ENCODE measurements at regions of chr12 and their contacts with region 1.

Region 1: GRCh38 chr12:15856097-15856982 is 25.8 kb upstream of the STRAP start:
- DNase-seq: peak in 2 of 5 donors; percentile 37 to 44
- ATAC-seq: peak in 3 of 4 donors; percentile 46 to 76 (median 67)
- H3K4me3 ChIP-seq: no peak overlapping the region
- H3K27ac ChIP-seq: peak overlapping the region in 5 of 12 donors; percentile 1 to 45 (median 8)
- H3K4me1 ChIP-seq: peaks cover 0 to 7% (median under 1%) of the 10 kb centered on the region in 12 donors
- H3K27me3 ChIP-seq: peaks cover 0 to 6% (median 0%) of the 10 kb centered on the region in 9 donors
- CTCF ChIP-seq: peak; percentile 64 to 94 (median 84)
- POLR2A ChIP-seq: no peak

Region 2: DNA sequence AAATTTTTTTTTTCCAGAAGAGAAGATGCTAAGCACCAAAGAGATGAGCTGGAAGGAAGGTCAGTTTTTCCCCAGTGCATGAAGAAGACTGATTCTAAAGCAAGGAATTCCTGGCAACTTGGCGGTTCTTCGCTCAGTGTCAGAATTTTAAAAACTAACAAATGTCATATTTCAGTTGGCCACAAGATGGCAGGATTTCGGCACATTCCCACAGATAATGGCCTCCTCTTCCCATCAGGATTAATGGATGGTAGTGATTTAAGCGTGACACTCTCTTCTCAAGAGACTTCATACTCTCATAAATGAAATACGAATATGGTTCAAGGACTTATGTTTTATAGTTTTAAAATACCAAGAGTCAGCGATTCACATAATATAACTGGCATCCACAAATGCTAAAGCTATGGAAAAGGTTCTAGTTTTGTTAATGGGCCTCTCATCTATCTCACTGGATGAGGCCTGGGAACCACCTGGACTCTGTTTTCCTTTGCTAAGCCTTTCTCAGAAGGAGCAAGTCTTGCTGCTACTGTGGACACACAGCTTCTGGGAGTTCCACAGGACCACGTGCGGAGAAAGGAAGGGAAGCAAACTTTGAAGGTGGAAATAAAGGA is 580.1 kb before region 1 on chr12:
- intact Hi-C with region 1: loop called (anchors 2 to 10 kb)
- DNase-seq: peak in 1 of 5 donors; percentile 14
- ATAC-seq: peak in 2 of 4 donors; percentile 49 to 61
- H3K4me3 ChIP-seq: no peak overlapping the region
- H3K27ac ChIP-seq: no peak overlapping the region
- H3K4me1 ChIP-seq: peaks cover 0 to 15% (median 11%) of the 10 kb centered on the region in 12 donors
- H3K27me3 ChIP-seq: peaks cover 0 to 8% (median 0%) of the 10 kb centered on the region in 9 donors
- CTCF ChIP-seq: peak; percentile 56 to 80 (median 72)
- POLR2A ChIP-seq: no peak

Region 3: DNA sequence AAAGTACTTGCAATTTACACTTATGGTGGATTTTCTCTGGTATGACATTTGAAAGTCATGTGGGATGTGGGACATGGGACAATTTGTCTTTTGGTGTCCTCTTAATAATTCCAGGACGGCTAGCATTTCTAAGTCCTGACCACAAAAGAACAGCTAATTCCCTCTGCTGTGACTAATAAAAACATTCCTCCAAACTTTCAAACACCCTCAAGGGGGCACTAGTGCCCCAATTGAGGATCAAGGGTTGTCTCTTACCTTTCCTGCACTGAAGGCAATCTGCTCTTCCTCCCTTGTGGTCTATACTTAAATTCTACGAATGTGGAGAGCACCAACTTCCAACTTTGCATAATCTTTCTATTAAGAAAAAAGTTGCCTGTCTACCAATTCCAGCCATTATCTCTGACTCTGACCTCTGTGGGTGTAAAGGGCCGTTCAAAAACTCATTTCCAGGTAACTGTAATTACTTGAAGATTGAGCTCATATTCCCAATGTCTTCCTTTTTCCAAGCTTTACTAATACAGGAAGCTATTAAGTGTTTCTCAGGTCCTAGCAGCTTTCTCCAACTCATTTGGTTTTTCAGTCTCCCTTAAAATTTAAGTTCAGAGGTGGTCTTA is 323.9 kb before region 1 on chr12:
- intact Hi-C with region 1: loop called in 4 of 10 experiments (anchors 5 kb)
- DNase-seq: no peak
- ATAC-seq: peak in 3 of 4 donors; percentile 54 to 69 (median 57)
- H3K4me3 ChIP-seq: no peak overlapping the region
- H3K27ac ChIP-seq: no peak overlapping the region
- H3K4me1 ChIP-seq: peaks cover 0 to 26% (median 0%) of the 10 kb centered on the region in 12 donors
- H3K27me3 ChIP-seq: no peaks in the 10 kb centered on the region
- CTCF ChIP-seq: peak in 11 of 12 donors; percentile 25 to 58 (median 38)
- POLR2A ChIP-seq: no peak

Region 4: DNA sequence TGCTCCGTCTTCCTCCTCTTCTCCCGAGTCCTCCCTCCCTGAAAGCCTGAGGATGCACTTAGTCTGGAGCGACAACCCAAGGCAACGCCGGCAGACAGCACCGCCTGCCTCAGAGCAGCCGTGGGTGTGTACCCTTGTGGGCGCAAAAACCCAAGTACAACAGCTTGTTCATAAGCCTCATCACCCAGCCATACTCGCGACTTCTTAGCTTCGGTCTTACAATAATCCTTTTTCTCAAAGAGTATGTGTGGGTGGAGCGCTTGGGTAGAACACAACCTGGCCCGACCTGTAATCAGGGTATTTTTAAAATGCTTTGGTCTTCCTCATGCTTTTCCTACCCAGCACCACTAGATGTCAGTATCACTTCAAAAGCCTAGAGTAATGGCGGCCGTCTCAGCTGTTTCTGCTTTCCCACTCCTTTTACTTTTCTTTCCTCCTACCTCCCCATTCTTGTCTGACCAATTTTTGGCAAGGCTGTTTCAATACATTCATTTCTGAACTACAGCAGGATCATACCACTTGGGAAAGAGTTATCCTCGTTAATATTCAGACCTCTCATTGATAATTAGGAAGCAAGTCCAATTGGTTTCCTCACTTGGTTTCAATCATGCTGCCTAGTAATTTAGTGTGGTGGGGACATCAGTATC is 266.0 kb before region 1 on chr12:
- intact Hi-C with region 1: loop called (anchors 1 to 2 kb)
- DNase-seq: peak; percentile 28 to 54 (median 36)
- ATAC-seq: peak; percentile 61 to 90 (median 89)
- H3K4me3 ChIP-seq: peak overlapping the region in 9 of 12 donors; percentile 22 to 47 (median 36)
- H3K27ac ChIP-seq: peak overlapping the region in 6 of 12 donors; percentile 5 to 60 (median 38)
- H3K4me1 ChIP-seq: peaks cover 0 to 8% (median 0%) of the 10 kb centered on the region in 12 donors
- H3K27me3 ChIP-seq: no peaks in the 10 kb centered on the region
- CTCF ChIP-seq: peak; percentile 83 to 98 (median 90)
- POLR2A ChIP-seq: no peak

Region 5: GRCh38 chr12:15688202-15688736 is 168.1 kb before region 1 on chr12:
- intact Hi-C with region 1: no loop called
- DNase-seq: peak; percentile 52 to 77 (median 71)
- ATAC-seq: peak in 3 of 4 donors; percentile 82 to 88 (median 87)
- H3K4me3 ChIP-seq: peak overlapping the region in 9 of 12 donors; percentile 3 to 46 (median 23)
- H3K27ac ChIP-seq: peak overlapping the region in 11 of 12 donors; percentile 41 to 83 (median 62)
- H3K4me1 ChIP-seq: peaks cover 0 to 64% (median 23%) of the 10 kb centered on the region in 12 donors
- H3K27me3 ChIP-seq: no peaks in the 10 kb centered on the region
- CTCF ChIP-seq: no peak
- POLR2A ChIP-seq: peak in 1 of 2 donors; percentile 45

Region 6: GRCh38 chr12:15772405-15773018 is 83.8 kb before region 1 on chr12:
- intact Hi-C with region 1: loop called in 1 of 10 experiments (anchors 5 kb)
- DNase-seq: no peak
- ATAC-seq: no peak
- H3K4me3 ChIP-seq: no peak overlapping the region
- H3K27ac ChIP-seq: no peak overlapping the region
- H3K4me1 ChIP-seq: peaks cover 0 to 65% (median 3%) of the 10 kb centered on the region in 12 donors
- H3K27me3 ChIP-seq: no peaks in the 10 kb centered on the region
- CTCF ChIP-seq: peak; percentile 11 to 63 (median 33)
- POLR2A ChIP-seq: no peak